ENCODE measurements at regions of chr12 and their contacts with region 1.

Region 1: DNA sequence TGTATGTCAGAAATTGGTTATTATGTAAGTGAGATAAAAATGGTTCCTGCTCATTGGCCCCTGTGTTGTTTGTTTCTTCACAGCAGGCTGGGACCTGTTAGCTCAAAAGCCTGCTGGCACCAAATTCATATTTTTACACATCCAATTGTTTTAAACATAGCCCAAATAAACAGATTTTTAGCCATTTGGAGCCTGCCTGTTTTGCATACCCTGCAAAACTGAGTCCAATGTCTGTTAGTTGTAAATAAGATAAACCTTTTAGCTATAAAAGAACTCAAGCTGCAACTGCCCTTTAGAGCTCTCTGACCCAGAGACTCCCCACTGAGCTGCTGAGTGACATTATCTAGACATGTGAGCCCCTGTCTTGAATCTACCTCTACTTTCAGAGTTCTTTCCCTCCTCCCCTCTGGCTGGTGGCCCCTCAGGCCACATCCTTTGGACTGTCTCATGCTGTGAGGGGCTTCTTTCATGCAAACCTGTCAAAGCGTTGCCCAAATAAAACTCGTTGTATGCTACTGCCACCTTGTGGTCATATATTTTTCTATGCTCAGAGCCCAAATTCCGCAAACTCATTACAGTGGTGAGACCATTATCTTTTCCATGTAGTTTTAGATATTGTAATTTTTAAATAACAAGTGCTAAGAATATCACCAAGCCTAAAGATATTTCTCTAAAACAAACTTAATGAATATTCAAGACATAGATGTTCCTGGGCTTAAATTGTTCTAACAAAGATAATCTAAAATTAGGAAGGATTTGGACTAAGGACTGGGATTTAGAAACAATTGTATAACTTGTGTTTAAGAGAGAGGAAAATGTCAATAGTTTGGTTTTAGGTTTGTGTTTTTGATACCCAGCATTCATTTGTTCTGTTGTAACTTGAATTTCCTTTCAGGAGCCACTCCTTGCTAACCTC is 337.9 kb downstream of the AACS start:
- DNase-seq: no peak
- H3K4me3 ChIP-seq: no peak overlapping the region
- H3K27ac ChIP-seq: no peak overlapping the region
- H3K4me1 ChIP-seq: no peaks in the 10 kb centered on the region
- H3K27me3 ChIP-seq: no peaks in the 10 kb centered on the region
- CTCF ChIP-seq: peak; percentile 38 to 77 (median 62)
- EP300 ChIP-seq: no peak
- POLR2A ChIP-seq: no peak

Region 2: DNA sequence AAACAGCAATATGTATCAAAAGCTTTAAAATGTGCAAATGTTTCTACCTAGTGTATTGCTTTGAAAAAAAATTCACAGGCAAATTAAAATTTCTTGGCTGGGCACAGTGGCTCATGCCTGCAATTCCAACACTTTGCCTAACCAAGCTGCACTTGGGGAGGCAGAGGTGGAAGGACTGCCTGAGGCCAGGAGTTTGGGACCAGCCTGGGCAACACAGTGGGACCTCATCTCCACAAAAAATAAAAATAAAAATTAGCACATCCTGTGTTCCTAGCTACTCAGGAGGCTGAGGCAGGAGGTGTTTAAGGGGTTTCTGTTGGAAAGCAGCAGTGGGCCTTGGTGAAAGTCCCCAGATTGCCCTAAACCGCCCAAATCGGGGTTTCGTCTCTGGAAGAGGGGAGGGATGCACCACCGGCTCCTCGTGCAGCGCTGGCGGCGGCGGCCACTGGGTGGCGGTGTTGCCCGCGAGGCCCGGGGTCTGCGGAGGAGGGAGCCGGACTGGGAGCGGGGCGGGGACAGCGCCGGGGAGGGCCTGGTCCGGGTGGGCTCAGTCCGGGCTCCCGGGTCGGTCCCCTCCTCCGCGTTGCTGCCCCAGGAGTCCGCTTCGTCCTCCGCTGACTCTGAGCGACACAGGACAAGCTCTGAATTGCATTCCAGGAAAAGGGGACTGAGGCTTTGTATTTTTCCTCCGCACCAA is 72.3 kb before region 1 on chr12:
- in situ Hi-C with region 1: loop called in 1 of 4 experiments (anchors 10 kb)
- intact Hi-C with region 1: no loop called
- DNase-seq: peak; percentile 74
- H3K4me3 ChIP-seq: peak overlapping the region; percentile 27 to 41 (median 34)
- H3K27ac ChIP-seq: peak overlapping the region in 1 of 4 donors; percentile 66
- H3K4me1 ChIP-seq: peaks cover 0 to 4% (median 1%) of the 10 kb centered on the region in 4 donors
- H3K27me3 ChIP-seq: peaks cover 36% of the 10 kb centered on the region
- CTCF ChIP-seq: peak; percentile 80 to 93 (median 90)
- EP300 ChIP-seq: no peak
- POLR2A ChIP-seq: no peak

Region 3: GRCh38 chr12:125340791-125341190 is 62.3 kb before region 1 on chr12:
- in situ Hi-C with region 1: loop called in 2 of 4 experiments (anchors 10 kb)
- intact Hi-C with region 1: no loop called
- DNase-seq: peak; percentile 39
- H3K4me3 ChIP-seq: no peak overlapping the region
- H3K27ac ChIP-seq: peak overlapping the region; percentile 31 to 76 (median 63)
- H3K4me1 ChIP-seq: peaks cover 0 to 20% (median 13%) of the 10 kb centered on the region in 4 donors
- H3K27me3 ChIP-seq: no peaks in the 10 kb centered on the region
- CTCF ChIP-seq: no peak
- EP300 ChIP-seq: no peak
- POLR2A ChIP-seq: no peak

Region 4: DNA sequence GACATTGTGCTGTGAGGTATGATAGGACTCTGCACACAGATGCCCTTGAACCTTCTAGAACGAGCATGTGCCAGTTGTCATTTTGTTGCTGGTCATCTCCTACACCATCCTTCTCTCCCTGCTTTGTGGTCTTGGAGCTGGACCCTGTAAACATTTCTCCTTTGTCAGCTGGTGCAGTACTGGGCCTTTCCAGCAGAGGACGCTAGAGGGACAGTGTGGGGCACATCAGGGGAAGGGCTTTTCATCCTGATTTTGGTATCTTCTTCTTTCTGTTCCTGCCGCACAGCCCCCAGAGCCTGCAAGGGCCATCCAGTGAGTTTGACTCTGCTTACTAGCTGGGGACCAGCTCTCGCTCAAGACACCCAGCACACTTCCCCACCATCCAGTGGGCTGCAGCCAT is 146.7 kb after region 1 on chr12:
- in situ Hi-C with region 1: no loop called
- intact Hi-C with region 1: no loop called
- DNase-seq: no peak
- H3K4me3 ChIP-seq: no peak overlapping the region
- H3K27ac ChIP-seq: no peak overlapping the region
- H3K4me1 ChIP-seq: no peaks in the 10 kb centered on the region
- H3K27me3 ChIP-seq: no peaks in the 10 kb centered on the region
- CTCF ChIP-seq: no peak
- EP300 ChIP-seq: no peak
- POLR2A ChIP-seq: no peak